ENCODE measurements at regions of chr21 and their contacts with region 1.

Region 1: DNA sequence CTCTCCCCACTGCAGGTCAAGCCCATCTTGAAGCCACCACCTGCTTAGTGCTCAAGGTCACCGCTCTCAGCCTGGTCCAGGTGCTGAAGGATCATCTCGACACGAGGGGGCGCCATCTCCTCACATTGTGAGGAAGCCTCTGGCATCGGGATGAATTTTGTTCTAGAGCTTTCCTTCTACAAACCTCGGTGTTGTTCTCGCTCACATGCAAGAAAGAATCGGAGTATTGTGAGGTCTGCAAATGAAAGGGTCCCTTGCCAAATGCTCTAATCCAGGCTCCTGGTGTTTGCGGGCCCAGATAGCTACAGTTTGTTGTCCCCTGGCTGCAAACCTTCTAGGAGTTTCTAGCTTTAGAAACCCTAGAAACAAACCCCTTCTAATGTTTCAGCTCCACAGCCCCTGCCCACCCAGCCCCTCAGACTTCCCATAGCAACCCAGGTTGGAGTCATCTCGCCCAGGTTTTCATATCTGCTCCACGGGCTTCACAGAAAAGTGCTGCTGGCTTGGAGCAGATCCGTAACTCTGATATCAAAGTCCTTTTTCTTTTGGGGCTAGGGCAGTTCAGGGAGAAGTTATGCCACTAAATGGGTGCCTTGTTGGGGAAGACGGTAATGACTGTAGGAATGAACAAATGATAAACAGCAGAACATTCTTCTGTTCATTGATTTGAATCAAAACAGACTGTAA is 8.6 kb upstream of the ATP5PO start:
- DNase-seq: peak; percentile 98
- H3K4me3 ChIP-seq: peak overlapping the region in 2 of 4 donors; percentile 10 to 30
- H3K27ac ChIP-seq: peak overlapping the region in 3 of 4 donors; percentile 1 to 52 (median 47)
- H3K4me1 ChIP-seq: peaks cover 7 to 14% (median 12%) of the 10 kb centered on the region in 4 donors
- H3K27me3 ChIP-seq: no peaks in the 10 kb centered on the region
- CTCF ChIP-seq: peak; percentile 87 to 93 (median 92)
- EP300 ChIP-seq: no peak
- POLR2A ChIP-seq: no peak

Region 2: DNA sequence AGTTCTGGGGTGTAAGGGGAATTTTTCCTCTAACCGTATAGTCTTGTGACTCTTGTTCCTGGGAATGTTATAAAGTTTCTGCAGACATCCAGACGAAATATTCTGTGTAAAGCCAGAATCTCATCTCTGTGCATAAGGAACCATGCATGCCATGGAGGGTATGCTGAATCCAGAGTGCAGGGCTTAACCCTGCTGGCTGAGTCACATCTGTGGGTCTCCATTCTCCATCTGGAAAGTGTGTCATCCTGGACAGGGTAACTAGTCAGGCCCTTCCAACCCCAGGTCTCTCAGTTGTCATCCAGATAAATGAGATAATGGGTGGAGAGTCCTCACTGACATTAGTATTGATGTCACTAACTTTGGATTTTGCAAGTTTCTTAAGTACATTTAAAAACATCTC is 57.4 kb before region 1 on chr21:
- intact Hi-C with region 1: no loop called
- DNase-seq: no peak
- H3K4me3 ChIP-seq: no peak overlapping the region
- H3K27ac ChIP-seq: no peak overlapping the region
- H3K4me1 ChIP-seq: no peaks in the 10 kb centered on the region
- H3K27me3 ChIP-seq: no peaks in the 10 kb centered on the region
- CTCF ChIP-seq: no peak
- EP300 ChIP-seq: no peak
- POLR2A ChIP-seq: no peak

Region 3: DNA sequence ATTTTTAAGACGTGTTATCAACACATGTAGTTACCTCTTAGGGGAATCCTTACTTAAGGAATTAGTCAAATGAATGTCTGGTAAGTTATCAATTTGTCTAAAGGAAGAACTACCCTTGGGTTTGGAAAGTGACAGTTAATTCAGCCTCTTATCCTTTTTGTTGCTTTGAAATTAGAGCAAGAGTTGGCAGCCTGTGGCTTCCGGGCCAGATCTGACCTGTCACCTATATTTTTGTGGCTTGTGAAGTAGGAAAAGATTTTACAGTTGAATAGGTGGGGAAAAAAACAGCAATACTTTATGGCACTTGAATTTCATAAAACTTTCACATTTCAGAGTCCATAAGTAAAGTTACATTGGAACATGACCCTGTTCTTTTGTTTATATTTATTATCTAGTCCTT is 154.7 kb after region 1 on chr21:
- intact Hi-C with region 1: loop called (anchors 5 kb)
- DNase-seq: no peak
- H3K4me3 ChIP-seq: no peak overlapping the region
- H3K27ac ChIP-seq: no peak overlapping the region
- H3K4me1 ChIP-seq: peaks cover 33 to 92% (median 68%) of the 10 kb centered on the region in 4 donors
- H3K27me3 ChIP-seq: no peaks in the 10 kb centered on the region
- CTCF ChIP-seq: no peak
- EP300 ChIP-seq: no peak
- POLR2A ChIP-seq: no peak

Region 4: DNA sequence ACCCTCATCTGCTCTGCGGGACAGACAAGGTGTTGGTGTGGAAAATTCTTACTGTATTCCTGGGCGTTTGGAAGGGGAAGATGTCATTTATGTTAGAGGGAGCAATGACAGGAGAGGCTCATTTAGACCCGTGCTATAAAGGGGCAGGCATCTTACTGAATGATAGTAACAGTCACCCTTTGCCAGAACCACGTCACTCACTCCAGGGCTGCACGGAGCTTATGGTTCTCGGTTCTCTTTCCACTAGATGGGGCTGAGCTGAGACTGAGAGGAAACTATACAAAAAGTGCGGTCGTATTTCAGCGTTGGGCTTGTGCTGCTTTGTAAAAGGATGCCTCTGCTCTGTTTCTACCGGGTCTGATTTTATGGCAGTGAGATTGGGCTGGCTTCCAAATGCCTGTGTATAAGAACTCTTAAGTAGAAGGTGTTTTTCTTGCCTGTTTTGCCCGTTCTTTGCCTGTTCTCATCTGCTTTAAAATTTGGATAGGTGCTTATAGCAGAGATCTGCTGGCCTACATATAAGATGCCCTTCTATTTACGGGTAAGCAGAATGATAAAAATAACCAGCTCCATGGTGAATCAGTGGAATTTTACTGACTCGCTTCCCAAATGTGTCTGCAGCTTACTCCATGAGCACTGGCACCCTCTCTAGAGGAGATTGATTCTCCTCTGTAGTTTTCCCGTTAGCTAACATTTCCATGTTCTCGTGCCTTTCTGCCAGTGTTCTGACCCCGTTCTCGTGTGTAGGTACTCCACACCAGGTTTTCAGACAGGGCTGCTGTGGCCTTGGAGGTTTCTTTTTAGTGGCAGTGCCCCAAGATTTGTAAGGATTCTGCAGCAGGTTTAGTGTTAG is 205.0 kb after region 1 on chr21:
- intact Hi-C with region 1: loop called (anchors 5 kb)
- DNase-seq: peak; percentile 74
- H3K4me3 ChIP-seq: peak overlapping the region; percentile 12 to 32 (median 31)
- H3K27ac ChIP-seq: peak overlapping the region; percentile 79 to 85 (median 84)
- H3K4me1 ChIP-seq: peaks cover 64 to 86% (median 79%) of the 10 kb centered on the region in 4 donors
- H3K27me3 ChIP-seq: no peaks in the 10 kb centered on the region
- CTCF ChIP-seq: peak in 2 of 3 experiments; percentile 17 to 44
- EP300 ChIP-seq: no peak
- POLR2A ChIP-seq: no peak

Region 5: DNA sequence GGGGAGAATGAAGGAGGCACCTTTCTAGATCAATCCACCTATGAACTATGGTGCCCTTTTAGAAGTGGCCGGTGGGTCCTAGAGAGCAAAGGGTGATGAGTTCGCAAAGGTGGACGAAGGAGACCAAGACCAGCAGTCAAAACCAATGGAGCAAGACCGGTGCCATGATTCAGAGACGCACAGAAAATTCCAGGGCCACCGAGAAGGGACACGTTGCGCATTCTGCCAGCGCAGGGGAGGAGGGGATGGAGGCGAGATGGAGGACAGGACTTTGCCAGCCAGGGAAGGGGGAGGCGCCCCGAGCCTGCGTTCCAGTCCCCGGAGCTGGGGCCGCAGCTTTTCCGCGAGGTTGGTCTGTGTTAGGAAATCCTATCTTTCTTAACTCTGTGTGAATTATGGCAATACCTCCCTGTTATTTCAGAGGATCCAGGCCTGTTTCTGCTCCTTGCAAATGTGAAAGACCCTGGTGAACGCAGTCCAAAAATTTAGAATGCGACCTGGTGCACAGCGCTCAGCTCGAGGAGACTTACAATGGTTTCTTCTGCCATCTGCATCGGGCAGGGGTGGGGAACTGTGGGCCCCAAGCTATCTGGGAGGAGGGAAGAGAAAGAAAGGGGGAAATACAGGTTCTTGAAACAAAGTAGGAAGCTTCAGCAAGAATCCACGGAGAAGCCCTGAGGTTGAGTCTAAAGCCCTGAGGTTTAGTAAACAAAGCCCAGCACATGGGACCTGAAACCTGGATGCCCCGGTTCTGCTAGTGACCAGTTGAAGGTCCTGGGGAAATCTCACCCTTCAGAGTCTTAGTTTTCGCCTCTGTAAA is 278.5 kb after region 1 on chr21:
- intact Hi-C with region 1: loop called (anchors 2 kb)
- DNase-seq: no peak
- H3K4me3 ChIP-seq: peak overlapping the region; percentile 51 to 69 (median 54)
- H3K27ac ChIP-seq: peak overlapping the region; percentile 65 to 77 (median 74)
- H3K4me1 ChIP-seq: peaks cover 13 to 56% (median 34%) of the 10 kb centered on the region in 4 donors
- H3K27me3 ChIP-seq: no peaks in the 10 kb centered on the region
- CTCF ChIP-seq: no peak
- EP300 ChIP-seq: no peak
- POLR2A ChIP-seq: no peak

Region 6: GRCh38 chr21:34345091-34345871 is 421.1 kb after region 1 on chr21:
- intact Hi-C with region 1: loop called (anchors 1 kb)
- DNase-seq: no peak
- H3K4me3 ChIP-seq: no peak overlapping the region
- H3K27ac ChIP-seq: peak overlapping the region; percentile 55 to 66 (median 60)
- H3K4me1 ChIP-seq: peaks cover 24 to 42% (median 39%) of the 10 kb centered on the region in 4 donors
- H3K27me3 ChIP-seq: no peaks in the 10 kb centered on the region
- CTCF ChIP-seq: no peak
- EP300 ChIP-seq: no peak
- POLR2A ChIP-seq: no peak

Measured in esophagus muscularis mucosa (tissue), 4 donors.